ENCODE measurements at regions of chr12 and their contacts with region 1.

Region 1: DNA sequence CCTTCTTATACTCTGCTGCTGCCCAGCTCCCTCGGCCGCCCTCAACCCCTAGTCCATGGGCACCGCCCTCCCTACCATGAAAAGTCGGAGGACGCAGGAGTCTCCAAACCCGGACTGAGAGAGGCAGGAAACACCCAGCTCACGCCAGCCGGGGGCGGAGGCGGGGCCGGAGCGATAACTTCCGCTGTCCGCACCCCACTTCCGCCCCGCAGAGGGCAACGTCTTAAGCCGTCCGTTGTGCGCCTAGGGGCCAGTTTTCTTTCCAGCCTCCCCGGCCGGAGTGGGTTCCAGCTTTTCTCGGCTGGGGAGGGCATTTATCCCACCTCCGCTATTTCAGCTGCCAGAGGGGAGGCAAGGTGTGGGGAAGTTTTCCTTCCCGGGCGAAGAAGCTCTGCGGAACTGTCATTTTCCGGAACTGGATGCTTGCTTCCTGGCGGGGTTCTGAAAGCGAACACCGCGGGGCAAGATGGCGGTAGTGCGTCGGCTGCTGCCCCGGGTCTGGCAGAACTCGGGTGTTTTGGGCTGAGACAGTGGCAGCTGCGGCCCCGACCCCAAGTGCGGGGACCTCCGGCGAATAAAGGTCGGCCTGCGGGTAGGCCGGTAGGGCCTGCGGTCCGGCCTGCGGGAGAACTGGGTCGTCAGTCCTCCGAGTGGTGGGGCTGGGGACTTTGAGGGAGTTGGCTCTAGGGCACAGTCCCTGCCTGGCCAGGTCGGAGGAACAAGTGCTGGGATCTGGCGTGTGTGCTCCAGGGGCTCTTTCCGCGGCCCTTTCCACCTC is at the starts of genes KCTD10 and UBE3B:
- DNase-seq: peak; percentile 87 to 88
- H3K4me3 ChIP-seq: peak within 1 kb of the TSS; percentile 79 to 97 (median 87)
- H3K27ac ChIP-seq: peak within 1 kb of the TSS; percentile 97 to 99 (median 98)
- H3K4me1 ChIP-seq: peaks cover 46 to 48% of the 10 kb centered on the region in 2 donors
- H3K27me3 ChIP-seq: no peaks in the 10 kb centered on the region
- CTCF ChIP-seq: peak in 2 of 6 experiments; percentile 7 to 18
- POLR2A ChIP-seq: peak; percentile 63 to 92
- total RNA-seq, gene KCTD10: 70.3 to 149 (median 85.4) TPM
- total RNA-seq, gene UBE3B: 52.2 to 72.5 (median 65.5) TPM

Region 2: DNA sequence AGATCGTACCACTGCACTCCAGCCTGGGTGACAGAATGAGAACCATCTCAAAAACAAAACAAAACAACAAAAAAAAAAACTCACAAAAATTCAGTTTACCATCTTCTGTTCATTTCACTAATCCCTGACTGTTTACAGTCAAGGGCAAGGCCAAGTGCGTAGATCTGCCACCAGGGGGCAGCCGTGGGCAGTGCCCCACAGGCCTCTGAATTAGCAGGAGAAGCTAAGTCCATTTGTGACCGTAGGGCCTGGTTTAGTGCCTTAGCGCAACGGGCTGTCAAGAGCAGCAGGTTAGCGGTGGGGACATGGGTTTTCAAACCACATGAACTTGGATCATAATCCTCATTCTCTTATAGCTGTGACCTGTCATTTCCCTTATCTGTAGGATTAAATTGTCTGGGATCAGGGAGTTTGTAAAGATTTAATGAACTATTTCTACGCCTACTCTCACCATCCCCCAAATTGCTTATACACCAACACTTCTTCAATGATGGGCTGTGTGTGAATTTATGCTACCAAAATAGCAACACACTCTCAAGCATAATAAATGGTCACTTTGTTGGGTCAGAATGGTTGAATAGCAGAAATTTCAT is 49.2 kb before region 1 on chr12:
- intact Hi-C with region 1: loop called (anchors 5 kb)
- DNase-seq: peak; percentile 82 to 86
- H3K4me3 ChIP-seq: no peak overlapping the region
- H3K27ac ChIP-seq: no peak overlapping the region
- H3K4me1 ChIP-seq: peaks cover 3 to 8% of the 10 kb centered on the region in 2 donors
- H3K27me3 ChIP-seq: no peaks in the 10 kb centered on the region
- CTCF ChIP-seq: peak; percentile 87 to 98 (median 96)
- POLR2A ChIP-seq: no peak

Region 3: DNA sequence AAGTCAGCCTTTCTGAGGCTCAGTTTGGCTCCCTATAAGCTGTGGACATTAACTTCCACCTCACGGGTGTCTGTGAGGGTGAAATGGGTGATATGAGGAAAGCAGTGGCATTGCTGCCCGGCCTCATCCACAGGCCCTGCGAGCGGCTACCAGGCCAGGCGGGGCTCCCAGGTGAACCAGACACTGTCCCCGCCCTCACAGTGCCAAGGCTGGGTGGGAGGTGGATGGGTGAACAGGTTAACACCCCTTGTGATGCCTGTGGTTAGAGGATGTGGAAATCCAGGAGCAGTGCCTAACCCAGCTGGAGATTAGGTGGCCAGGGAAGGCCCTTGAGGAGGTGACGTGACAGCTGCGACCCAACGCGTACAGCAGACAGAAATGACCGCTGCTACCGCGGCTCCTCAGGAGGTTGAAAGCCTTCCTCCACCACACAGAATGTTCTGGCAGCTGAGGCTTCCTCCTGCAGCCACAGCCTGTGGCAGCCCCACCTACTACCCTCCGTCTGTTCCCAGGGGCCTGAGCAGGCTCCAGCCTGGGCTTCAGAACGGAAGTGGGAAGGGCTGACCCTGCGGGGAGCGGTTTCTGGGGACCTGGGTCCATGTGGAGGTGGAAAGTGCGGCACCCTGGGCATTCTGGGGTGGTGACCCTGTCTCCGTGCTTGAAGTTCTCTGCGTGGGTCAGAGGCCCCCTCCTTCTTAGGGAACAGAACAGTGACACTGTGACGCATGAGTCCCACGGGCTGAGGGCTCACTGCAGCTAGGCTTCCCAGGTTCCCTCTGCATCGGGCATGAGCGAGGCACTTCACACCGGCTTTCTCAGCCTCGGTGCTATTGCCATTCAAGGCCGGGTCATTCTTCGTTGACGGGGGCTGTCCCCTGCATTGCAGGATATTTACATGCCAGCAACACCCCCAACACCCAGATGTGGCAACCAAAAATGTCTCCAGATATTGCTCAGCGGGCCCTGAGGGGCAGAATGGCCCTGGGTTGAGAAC is 86.2 kb after region 1 on chr12:
- intact Hi-C with region 1: no loop called
- DNase-seq: no peak
- H3K4me3 ChIP-seq: no peak overlapping the region
- H3K27ac ChIP-seq: no peak overlapping the region
- H3K4me1 ChIP-seq: no peaks in the 10 kb centered on the region
- H3K27me3 ChIP-seq: no peaks in the 10 kb centered on the region
- CTCF ChIP-seq: no peak
- POLR2A ChIP-seq: no peak

Measured in thyroid gland (tissue), 4 donors.